Astrocyte of the cerebellum (primary cell): ENCODE measurements at regions of chr5 and their contacts with region 1.

Region 1: GRCh38 chr5:65984098-65984885 is 57.9 kb downstream of the ERBIN start:
- DNase-seq: no peak
- H3K4me3 ChIP-seq: no peak overlapping the region
- CTCF ChIP-seq: no peak

Region 2: GRCh38 chr5:65913519-65913918 is 70.8 kb before region 1 on chr5:
- in situ Hi-C with region 1: loop called (anchors 5 kb)
- DNase-seq: no peak
- H3K4me3 ChIP-seq: no peak overlapping the region
- CTCF ChIP-seq: no peak

Region 3: GRCh38 chr5:66039296-66039695 is 55.0 kb after region 1 on chr5:
- in situ Hi-C with region 1: loop called (anchors 5 kb)
- DNase-seq: no peak
- H3K4me3 ChIP-seq: no peak overlapping the region
- CTCF ChIP-seq: no peak

Region 4: DNA sequence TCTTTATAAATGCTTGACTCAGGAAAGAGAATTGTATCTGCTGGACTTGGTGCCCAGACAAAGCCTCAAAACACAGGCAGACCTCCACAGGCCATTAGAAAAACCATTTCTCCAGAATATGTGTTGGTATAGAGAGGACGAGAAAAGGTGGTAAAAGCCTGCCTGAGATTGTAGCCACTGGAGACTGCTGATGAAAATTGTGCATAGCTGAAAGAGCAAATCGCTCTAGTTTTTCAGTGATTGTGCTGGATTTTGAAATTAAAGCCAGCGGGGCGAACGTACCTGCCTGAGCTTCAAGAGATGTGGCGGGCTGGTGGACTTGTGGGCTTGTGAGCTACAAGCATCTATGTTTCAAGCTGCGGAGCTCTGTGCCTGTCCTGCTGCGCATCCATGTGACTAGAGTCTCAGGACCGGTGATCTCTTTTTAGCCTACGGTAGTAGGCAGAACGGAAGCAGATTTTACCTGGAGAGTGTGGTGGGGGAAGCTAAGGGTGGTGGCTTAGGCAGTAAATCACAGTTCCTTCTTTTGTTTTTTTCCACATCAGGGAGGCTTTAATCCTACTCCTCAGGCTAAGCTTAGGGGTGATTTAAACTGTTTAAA is 353.4 kb after region 1 on chr5:
- in situ Hi-C with region 1: no loop called
- DNase-seq: no peak
- H3K4me3 ChIP-seq: no peak overlapping the region
- CTCF ChIP-seq: no peak